ENCODE measurements at regions of chr17 and their contacts with region 1.

Region 1: DNA sequence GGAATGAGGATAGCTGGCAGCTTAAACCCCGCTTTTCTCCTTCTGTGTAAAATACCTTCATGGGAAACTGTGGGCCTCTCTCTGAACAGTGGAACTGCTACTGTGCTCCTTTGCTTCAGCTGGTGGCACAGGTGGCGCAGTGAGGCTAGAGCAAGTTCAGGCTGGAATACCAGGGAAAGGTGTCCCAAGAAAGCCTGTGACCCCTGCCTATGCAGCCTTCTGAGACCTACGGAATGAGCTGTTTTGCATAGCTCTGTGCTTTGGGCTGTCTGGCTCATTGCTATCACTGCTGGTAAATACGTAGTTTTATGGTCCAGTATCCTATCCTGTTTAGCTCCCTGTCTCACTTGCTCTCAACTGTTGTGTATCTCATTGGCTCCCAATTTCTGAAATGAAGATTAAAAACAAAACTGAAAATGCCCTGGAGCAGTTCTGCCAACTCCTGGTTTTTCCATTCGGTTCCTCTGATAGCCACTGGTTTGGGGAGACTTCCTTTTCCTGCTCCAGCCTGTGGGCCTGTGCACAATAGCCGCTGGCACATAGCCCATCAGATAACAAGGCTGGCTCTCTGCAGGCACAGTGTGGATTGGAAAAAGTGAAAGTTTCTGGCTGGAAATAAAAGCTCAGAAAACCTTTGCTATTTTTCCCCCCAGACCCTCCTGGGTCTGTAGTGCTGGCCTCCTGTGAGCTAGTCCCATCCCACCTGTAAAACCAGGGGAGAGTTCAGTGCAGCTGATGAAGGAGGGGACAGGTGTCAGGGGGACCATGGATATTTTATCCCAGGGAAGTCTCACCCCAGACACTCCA is 24.1 kb downstream of the LIMD2 start:
- DNase-seq: peak; percentile 99
- H3K4me3 ChIP-seq: peak overlapping the region in 2 of 3 experiments; percentile 3 to 61
- H3K27ac ChIP-seq: peak overlapping the region; percentile 91
- H3K4me1 ChIP-seq: peaks cover 51% of the 10 kb centered on the region
- H3K27me3 ChIP-seq: no peaks in the 10 kb centered on the region
- CTCF ChIP-seq: no peak
- POLR2A ChIP-seq: peak; percentile 43

Region 2: DNA sequence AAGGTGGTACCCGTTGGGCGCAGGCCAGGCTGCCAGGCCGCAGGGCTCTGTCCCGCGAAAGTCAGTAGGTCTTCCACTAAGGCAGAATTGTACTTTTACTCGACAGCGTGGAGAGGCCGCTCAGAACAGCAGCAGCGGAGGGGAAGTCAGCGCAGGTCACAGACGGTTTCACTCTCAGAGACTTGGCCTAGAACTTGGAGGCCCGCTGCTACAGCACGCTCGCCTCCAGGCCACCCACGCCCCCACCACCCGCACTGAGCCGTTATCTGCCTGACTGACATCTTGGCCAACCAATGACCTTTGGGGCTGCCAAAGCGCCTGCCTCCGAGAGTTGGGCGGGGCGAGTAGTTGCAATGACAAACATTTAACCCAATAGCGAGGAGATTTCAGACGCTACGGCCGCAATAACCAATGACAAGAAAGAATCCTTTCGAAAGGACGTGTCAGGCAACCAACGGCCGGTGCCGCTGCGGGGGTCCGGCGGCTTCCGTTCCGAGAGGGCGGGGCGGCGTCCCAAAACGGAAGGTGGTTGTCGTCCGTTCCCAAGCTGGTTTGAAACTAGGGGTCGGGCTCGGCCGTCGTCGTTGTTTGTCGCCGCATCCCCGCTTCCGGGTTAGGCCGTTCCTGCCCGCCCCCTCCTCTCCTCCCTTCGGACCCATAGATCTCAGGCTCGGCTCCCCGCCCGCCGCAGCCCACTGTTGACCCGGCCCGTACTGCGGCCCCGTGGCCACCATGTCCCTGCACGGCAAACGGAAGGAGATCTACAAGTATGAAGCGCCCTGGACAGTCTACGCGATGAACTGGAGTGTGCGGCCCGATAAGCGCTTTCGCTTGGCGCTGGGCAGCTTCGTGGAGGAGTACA is 125.6 kb before region 1 on chr17 and contains the start of gene DCAF7:
- CTCF ChIA-PET with region 1: no interaction called
- POLR2A ChIA-PET with region 1: no interaction called
- dilution Hi-C with region 1: no loop called
- intact Hi-C with region 1: loop called (anchors 5 kb)
- DNase-seq: peak; percentile 100
- H3K4me3 ChIP-seq: peak within 1 kb of the TSS; percentile 42 to 77 (median 64)
- H3K27ac ChIP-seq: peak within 1 kb of the TSS; percentile 42
- H3K4me1 ChIP-seq: peaks cover 14% of the 10 kb centered on the region
- H3K27me3 ChIP-seq: no peaks in the 10 kb centered on the region
- CTCF ChIP-seq: no peak
- POLR2A ChIP-seq: peak; percentile 74
- total RNA-seq, gene DCAF7: 89.6 and 100 TPM in 2 replicates

Region 3: DNA sequence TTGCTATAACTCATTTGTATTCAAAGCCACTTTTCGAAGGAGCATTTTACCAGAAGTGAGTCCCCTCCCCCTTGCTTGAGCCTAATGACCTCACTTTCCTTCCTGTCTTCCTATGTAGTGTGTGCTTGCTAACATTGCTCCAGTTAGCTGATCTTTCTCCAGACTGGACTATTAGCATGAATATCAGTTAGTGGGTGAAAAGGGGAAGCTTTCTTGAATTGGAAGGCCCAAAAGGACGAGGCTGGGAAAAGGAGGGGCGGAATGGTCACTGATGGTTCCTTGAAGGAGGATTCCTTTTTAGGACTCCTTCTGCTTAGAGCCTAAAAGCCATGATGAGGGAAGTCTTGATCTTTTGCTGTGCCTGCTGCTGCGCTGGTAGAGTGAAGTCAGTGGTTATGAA is 41.6 kb before region 1 on chr17:
- CTCF ChIA-PET with region 1: interaction called, 13 read pairs
- POLR2A ChIA-PET with region 1: no interaction called
- dilution Hi-C with region 1: no loop called
- intact Hi-C with region 1: loop called (anchors 1 kb)
- DNase-seq: peak; percentile 83
- H3K4me3 ChIP-seq: peak overlapping the region in 1 of 3 experiments; percentile 60
- H3K27ac ChIP-seq: peak overlapping the region; percentile 79
- H3K4me1 ChIP-seq: peaks cover 36% of the 10 kb centered on the region
- H3K27me3 ChIP-seq: no peaks in the 10 kb centered on the region
- CTCF ChIP-seq: no peak
- POLR2A ChIP-seq: no peak

Region 4: DNA sequence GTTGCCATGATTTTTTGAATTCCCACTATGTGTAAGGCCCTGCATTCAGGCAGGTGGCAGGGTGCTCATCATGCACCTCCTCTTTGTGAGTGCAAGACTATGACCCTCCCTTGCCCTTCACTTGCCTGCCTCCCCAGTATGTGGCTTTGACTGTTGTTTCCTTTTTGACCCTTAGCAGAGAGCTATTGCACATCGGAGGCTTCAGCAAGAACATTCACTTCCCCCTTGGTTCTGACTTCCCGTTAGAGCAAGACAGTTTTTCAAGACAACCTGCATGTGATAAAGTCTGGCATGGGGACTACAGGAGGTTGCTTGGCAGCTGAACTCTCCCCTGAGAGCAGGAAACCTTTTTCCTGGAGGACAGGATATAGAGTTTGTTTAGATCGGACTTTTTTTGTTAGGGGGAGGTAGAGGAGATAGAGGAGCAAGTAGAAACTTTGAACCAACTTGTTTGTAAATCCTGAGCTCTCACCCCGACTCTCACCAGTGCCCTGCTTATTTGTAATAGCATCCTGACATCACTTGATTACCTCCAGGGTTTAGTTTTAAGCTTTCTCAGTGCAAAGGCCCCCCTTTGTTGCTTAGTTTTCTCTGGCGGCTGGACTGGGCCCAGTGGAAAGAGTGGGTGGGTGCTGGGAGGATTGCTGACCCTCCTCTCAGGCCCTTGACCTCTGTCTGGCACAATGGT is 10.1 kb before region 1 on chr17:
- CTCF ChIA-PET with region 1: interaction called, 37 read pairs
- POLR2A ChIA-PET with region 1: interaction called, 6 read pairs
- dilution Hi-C with region 1: no loop called
- intact Hi-C with region 1: no loop called
- DNase-seq: peak; percentile 80
- H3K4me3 ChIP-seq: peak overlapping the region in 1 of 3 experiments; percentile 2
- H3K27ac ChIP-seq: peak overlapping the region; percentile 17
- H3K4me1 ChIP-seq: peaks cover 20% of the 10 kb centered on the region
- H3K27me3 ChIP-seq: no peaks in the 10 kb centered on the region
- CTCF ChIP-seq: no peak
- POLR2A ChIP-seq: no peak